Ascending aorta (tissue), 2 donors: ENCODE measurements at regions of chr17 and their contacts with region 1.

Region 1: GRCh38 chr17:81020767-81021497 is 14.0 kb upstream of the BAIAP2 start:
- DNase-seq: no peak
- H3K4me3 ChIP-seq: no peak overlapping the region
- H3K27ac ChIP-seq: peak overlapping the region; percentile 5 to 42
- H3K4me1 ChIP-seq: peaks cover 11 to 12% of the 10 kb centered on the region in 2 donors
- H3K27me3 ChIP-seq: no peaks in the 10 kb centered on the region
- CTCF ChIP-seq: no peak

Region 2: DNA sequence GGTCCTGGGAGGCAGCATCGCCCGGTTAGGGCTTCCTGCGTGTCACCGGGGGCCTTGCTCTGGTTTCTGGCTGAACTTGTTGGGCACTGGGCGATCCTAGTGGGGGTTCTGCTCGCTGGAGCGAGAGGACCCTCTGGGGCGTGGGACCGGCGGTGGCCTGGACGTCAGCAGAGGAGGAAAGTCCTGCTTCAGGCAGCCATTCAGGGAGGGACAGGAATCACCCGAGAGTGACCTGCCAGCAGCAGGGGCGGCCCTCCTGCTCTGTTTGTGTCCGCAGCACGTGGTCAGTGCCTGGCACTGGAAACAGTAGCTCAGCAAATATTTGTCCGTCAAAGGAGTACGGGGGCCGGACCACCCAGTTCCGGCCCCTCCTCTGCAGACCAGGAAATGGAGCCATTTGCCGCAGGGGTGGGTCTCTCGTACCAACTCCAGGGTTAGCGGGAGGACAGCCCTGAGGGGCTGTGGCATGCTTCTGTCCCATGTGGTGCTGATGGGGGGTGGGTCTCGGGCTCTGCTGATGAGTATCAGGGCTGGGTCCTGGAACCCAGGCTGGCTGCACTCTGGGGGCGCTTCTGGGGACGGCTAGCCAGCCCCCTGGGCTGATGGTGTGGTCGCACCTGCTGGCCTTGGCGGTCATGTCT is 62.3 kb after region 1 on chr17:
- intact Hi-C with region 1: no loop called
- DNase-seq: no peak
- H3K4me3 ChIP-seq: no peak overlapping the region
- H3K27ac ChIP-seq: no peak overlapping the region
- H3K4me1 ChIP-seq: no peaks in the 10 kb centered on the region
- H3K27me3 ChIP-seq: no peaks in the 10 kb centered on the region
- CTCF ChIP-seq: no peak

Region 3: GRCh38 chr17:81094509-81095382 is 73.8 kb after region 1 on chr17:
- intact Hi-C with region 1: loop called (anchors 1 kb)
- DNase-seq: peak; percentile 77 to 89
- H3K4me3 ChIP-seq: peak overlapping the region in 1 of 2 donors; percentile 33
- H3K27ac ChIP-seq: peak overlapping the region; percentile 12 to 37
- H3K4me1 ChIP-seq: peaks cover 14 to 18% of the 10 kb centered on the region in 2 donors
- H3K27me3 ChIP-seq: no peaks in the 10 kb centered on the region
- CTCF ChIP-seq: no peak

Region 4: DNA sequence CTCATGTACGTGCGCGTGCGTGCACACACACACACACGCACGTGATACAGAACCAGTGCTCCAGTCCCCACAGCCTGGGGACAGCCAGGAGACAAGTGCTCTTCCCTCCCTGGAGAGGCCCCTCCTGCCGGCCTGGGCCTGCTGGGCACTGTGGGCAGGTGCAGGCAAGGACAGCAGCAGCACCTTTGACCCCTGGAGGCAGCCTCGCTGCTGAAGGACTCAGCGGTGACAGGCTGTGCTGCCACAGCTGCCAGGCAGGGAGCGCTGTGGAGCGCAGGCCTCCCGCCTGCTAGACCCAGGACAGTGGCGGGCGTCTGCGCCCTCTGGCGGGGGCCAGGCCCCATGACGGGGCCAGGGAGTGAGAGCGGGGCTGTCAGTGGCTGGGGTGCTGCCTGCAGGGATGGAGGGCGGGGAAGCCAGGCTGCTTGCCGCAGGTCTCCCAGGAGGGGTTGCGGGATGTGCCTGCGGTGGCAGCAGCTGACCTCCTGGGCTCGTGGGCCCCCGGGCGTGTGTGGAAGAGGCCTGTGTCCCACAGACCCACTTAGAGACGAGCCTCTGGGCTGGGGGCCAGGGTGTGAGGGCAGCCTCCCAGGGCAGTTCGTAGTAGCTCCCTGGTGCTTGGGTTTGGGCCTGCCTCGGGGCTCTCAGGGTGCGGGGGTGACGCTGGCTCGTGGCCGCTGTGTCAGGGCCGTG is 80.8 kb after region 1 on chr17:
- intact Hi-C with region 1: loop called (anchors 1 kb)
- DNase-seq: peak; percentile 28 to 89
- H3K4me3 ChIP-seq: no peak overlapping the region
- H3K27ac ChIP-seq: no peak overlapping the region
- H3K4me1 ChIP-seq: peaks cover 7 to 8% of the 10 kb centered on the region in 2 donors
- H3K27me3 ChIP-seq: no peaks in the 10 kb centered on the region
- CTCF ChIP-seq: peak; percentile 100